Testis (tissue), 5 donors: ENCODE measurements at regions of chr4 and their contacts with region 1.

Region 1: DNA sequence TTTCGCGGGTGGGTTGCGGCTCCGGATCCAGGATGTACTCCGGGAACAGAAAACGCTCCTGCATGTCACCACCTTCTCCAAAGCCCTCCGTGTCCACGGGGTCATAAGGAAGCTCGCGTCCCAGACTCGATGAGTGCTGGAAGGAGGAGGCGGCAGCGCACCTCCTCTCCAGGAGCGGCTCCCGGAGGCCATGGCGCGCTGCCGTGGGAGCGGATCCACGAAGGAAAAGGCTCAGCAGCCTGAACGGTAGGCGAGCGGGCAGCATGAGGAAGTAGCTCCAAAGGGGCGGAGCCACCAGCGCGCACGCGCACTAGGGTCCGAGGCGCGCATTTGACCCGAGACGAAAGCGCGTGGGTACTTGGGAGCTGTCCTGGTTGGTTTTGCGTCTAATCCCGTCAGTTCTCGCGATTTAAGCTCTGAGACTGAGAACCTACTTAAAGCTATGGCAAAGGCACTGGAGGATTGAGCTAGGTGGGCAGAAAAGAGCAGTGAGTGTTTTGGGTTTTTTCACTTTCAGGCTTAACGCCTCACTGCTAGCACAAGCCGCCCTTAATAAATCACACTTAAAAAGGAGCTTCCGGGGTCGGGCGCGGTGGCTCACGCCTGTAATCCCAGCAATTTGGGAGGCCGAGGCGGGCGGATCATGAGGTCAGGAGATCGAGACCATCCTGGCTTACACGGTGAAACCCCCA is at the start of gene NOA1:
- DNase-seq: peak; percentile 99
- H3K4me3 ChIP-seq: peak within 1 kb of the TSS; percentile 92 to 97
- H3K27ac ChIP-seq: peak within 1 kb of the TSS; percentile 73 to 93
- H3K4me1 ChIP-seq: peaks cover 16% of the 10 kb centered on the region
- H3K27me3 ChIP-seq: no peaks in the 10 kb centered on the region
- CTCF ChIP-seq: no peak
- POLR2A ChIP-seq: no peak
- total RNA-seq, gene NOA1: 16.9 to 18.1 TPM

Region 2: DNA sequence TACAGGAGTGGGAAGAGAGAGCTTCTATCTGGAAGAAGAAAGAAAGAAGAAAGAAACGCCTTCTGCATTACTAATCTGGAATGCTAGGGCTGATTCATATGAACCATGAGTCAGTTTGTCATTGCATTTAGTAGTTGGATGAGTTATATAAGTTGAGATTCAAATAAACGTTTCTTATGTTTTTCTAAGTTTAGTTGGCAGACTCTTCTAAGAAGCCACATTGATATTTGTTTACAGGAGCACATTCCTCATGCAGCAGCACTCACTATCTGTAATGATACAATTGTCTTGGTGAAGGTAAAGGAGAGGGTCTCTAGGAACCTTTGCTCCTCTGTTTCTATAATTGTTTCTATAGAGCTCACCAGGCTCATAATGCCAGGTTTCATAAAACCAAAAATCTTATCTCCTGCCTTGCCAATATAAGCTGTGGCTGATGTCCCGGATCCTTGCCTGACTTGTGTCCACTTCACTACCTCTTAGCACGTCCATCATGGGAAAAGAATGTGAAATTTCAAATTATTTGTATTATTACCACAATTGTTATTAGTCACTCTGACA is 335.9 kb before region 1 on chr4:
- intact Hi-C with region 1: no loop called
- DNase-seq: no peak
- H3K4me3 ChIP-seq: no peak overlapping the region
- H3K27ac ChIP-seq: no peak overlapping the region
- H3K4me1 ChIP-seq: no peaks in the 10 kb centered on the region
- H3K27me3 ChIP-seq: no peaks in the 10 kb centered on the region
- CTCF ChIP-seq: no peak
- POLR2A ChIP-seq: no peak

Region 3: GRCh38 chr4:56907489-56908205 is 69.8 kb before region 1 on chr4 and contains the start of gene REST:
- intact Hi-C with region 1: loop called (anchors 5 kb)
- DNase-seq: peak; percentile 84
- H3K4me3 ChIP-seq: peak within 1 kb of the TSS; percentile 96 to 98
- H3K27ac ChIP-seq: peak within 1 kb of the TSS; percentile 95 to 96
- H3K4me1 ChIP-seq: peaks cover 22% of the 10 kb centered on the region
- H3K27me3 ChIP-seq: no peaks in the 10 kb centered on the region
- CTCF ChIP-seq: no peak
- POLR2A ChIP-seq: no peak
- total RNA-seq, gene REST: 50.2 to 58.2 TPM